ENCODE measurements at regions of chr10 and their contacts with region 1.

Region 1: GRCh38 chr10:98309366-98310355 is 41.7 kb upstream of the LOXL4 start:
- DNase-seq: peak; percentile 73
- ATAC-seq: peak; percentile 94
- H3K4me3 ChIP-seq: no peak overlapping the region
- H3K27ac ChIP-seq: no peak overlapping the region
- H3K4me1 ChIP-seq: peaks cover 19% of the 10 kb centered on the region
- H3K27me3 ChIP-seq: no peaks in the 10 kb centered on the region
- CTCF ChIP-seq: peak; percentile 72

Region 2: DNA sequence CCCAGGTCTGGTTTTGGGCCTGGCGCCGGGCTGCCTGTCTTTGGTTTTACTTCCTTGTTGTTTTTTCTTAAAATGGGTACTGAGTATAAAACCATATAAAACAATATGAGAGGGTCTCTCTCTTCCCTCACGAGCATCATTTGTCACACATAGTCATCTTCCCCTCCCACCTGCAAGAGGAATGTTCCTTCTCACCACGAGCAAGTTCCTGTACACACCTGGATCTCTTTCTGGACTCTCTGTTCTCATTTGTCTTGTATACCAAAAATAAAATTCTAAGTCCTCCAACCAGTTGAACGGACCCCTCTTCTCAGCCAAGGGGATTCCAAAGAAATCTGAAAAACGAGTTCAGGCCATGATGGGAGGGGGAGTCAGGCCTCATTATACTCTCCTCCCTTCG is 748.0 kb before region 1 on chr10:
- CTCF ChIA-PET with region 1: no interaction called
- POLR2A ChIA-PET with region 1: no interaction called
- intact Hi-C with region 1: no loop called
- DNase-seq: no peak
- ATAC-seq: no peak
- H3K4me3 ChIP-seq: no peak overlapping the region
- H3K27ac ChIP-seq: no peak overlapping the region
- H3K4me1 ChIP-seq: peaks cover 9% of the 10 kb centered on the region
- H3K27me3 ChIP-seq: no peaks in the 10 kb centered on the region
- CTCF ChIP-seq: no peak

Region 3: DNA sequence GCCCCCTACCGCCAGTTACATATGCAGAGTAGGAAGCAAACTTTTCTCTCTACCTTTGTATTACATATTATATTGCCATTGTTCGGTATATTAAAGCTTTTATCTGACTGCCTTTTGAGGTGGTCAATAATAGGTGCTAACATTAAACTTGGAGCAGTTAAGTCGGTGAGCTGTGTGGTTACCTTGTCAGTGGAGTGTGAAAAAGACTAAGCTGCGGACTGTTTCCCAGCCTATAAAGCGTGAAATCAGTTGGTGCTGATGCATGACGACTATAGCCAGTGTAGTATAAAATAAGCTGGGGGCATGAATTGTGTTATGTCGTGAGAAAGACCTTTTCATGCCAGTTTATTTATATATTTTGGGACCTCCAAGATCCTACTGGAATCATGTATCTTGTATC is 141.5 kb before region 1 on chr10:
- CTCF ChIA-PET with region 1: interaction called, 5 read pairs
- POLR2A ChIA-PET with region 1: no interaction called
- intact Hi-C with region 1: loop called (anchors 5 kb)
- DNase-seq: no peak
- ATAC-seq: no peak
- H3K4me3 ChIP-seq: no peak overlapping the region
- H3K27ac ChIP-seq: no peak overlapping the region
- H3K4me1 ChIP-seq: no peaks in the 10 kb centered on the region
- H3K27me3 ChIP-seq: no peaks in the 10 kb centered on the region
- CTCF ChIP-seq: no peak

Region 4: GRCh38 chr10:98195120-98195519 is 114.5 kb before region 1 on chr10:
- CTCF ChIA-PET with region 1: no interaction called
- POLR2A ChIA-PET with region 1: no interaction called
- intact Hi-C with region 1: no loop called
- DNase-seq: no peak
- ATAC-seq: no peak
- H3K4me3 ChIP-seq: no peak overlapping the region
- H3K27ac ChIP-seq: no peak overlapping the region
- H3K4me1 ChIP-seq: no peaks in the 10 kb centered on the region
- H3K27me3 ChIP-seq: no peaks in the 10 kb centered on the region
- CTCF ChIP-seq: no peak

Region 5: GRCh38 chr10:98242823-98243222 is 66.8 kb before region 1 on chr10:
- CTCF ChIA-PET with region 1: no interaction called
- POLR2A ChIA-PET with region 1: no interaction called
- intact Hi-C with region 1: loop called (anchors 1 kb)
- DNase-seq: peak; percentile 43
- ATAC-seq: no peak
- H3K4me3 ChIP-seq: no peak overlapping the region
- H3K27ac ChIP-seq: no peak overlapping the region
- H3K4me1 ChIP-seq: no peaks in the 10 kb centered on the region
- H3K27me3 ChIP-seq: no peaks in the 10 kb centered on the region
- CTCF ChIP-seq: peak; percentile 66

Region 6: GRCh38 chr10:98262571-98262970 is 47.1 kb before region 1 on chr10:
- CTCF ChIA-PET with region 1: interaction called, 3 read pairs
- POLR2A ChIA-PET with region 1: no interaction called
- intact Hi-C with region 1: loop called (anchors 1 kb)
- DNase-seq: peak; percentile 70
- ATAC-seq: peak; percentile 45
- H3K4me3 ChIP-seq: no peak overlapping the region
- H3K27ac ChIP-seq: no peak overlapping the region
- H3K4me1 ChIP-seq: peaks cover 25% of the 10 kb centered on the region
- H3K27me3 ChIP-seq: no peaks in the 10 kb centered on the region
- CTCF ChIP-seq: peak; percentile 68

Region 7: DNA sequence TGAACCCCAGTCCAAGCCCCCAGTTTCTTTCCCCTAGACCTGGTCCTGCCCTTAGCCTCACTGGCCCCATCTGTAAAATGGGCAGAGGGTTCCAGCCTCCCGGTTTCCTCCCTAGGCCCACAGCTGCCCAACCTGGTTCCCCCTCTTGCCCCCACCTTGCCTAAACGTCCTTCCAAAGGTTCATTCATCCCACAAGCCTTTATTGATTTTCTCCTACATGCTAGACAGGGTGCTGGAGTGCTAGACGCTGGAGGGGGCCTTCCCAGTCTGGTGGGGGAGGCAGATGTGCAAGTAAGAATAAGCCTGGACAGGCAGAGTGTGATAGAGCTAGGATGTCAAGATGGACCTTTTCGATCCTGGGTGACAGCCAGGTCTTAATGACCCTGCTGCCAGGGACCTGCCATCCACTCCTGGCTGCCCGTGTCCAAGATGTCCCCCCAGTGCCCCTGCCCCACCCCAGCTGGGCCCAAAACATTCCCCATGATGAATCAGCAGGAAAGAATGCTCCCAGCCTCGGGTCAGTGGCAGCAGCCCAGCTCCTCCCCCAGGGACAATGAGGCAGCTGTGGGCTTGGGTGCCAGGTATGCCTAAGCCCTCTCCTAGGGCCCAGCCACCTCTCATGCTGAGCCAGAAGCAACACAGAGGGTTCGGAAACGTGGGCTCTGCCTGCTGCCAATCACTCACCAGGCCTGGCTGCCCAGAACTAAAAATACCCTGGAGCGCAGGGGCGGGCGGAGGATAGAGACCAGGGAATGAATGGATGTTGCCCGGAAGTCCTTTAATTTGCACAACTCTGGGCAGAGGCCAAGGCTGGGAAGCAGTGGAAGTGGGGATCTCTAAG is 40.4 kb before region 1 on chr10:
- CTCF ChIA-PET with region 1: interaction called, 3 read pairs
- POLR2A ChIA-PET with region 1: no interaction called
- intact Hi-C with region 1: loop called (anchors 2 kb)
- DNase-seq: peak; percentile 92
- ATAC-seq: peak; percentile 81
- H3K4me3 ChIP-seq: peak overlapping the region; percentile 61
- H3K27ac ChIP-seq: peak overlapping the region; percentile 67
- H3K4me1 ChIP-seq: peaks cover 27% of the 10 kb centered on the region
- H3K27me3 ChIP-seq: no peaks in the 10 kb centered on the region
- CTCF ChIP-seq: no peak

Region 8: GRCh38 chr10:98488669-98489426 is 179.2 kb after region 1 on chr10:
- CTCF ChIA-PET with region 1: no interaction called
- POLR2A ChIA-PET with region 1: no interaction called
- intact Hi-C with region 1: no loop called
- DNase-seq: peak; percentile 57
- ATAC-seq: no peak
- H3K4me3 ChIP-seq: no peak overlapping the region
- H3K27ac ChIP-seq: 0 out of 2 replicates have a peak overlapping the region, but pooled peaks have one; percentile 36
- H3K4me1 ChIP-seq: peaks cover 22% of the 10 kb centered on the region
- H3K27me3 ChIP-seq: no peaks in the 10 kb centered on the region
- CTCF ChIP-seq: no peak

Measured in PC-3 (cell line).